Activated naive CD4-positive, alpha-beta T cell treated with anti-CD3 and anti-CD28 coated beads for 36 hours (primary cell): ENCODE measurements at regions of chr19 and their contacts with region 1.

Region 1: DNA sequence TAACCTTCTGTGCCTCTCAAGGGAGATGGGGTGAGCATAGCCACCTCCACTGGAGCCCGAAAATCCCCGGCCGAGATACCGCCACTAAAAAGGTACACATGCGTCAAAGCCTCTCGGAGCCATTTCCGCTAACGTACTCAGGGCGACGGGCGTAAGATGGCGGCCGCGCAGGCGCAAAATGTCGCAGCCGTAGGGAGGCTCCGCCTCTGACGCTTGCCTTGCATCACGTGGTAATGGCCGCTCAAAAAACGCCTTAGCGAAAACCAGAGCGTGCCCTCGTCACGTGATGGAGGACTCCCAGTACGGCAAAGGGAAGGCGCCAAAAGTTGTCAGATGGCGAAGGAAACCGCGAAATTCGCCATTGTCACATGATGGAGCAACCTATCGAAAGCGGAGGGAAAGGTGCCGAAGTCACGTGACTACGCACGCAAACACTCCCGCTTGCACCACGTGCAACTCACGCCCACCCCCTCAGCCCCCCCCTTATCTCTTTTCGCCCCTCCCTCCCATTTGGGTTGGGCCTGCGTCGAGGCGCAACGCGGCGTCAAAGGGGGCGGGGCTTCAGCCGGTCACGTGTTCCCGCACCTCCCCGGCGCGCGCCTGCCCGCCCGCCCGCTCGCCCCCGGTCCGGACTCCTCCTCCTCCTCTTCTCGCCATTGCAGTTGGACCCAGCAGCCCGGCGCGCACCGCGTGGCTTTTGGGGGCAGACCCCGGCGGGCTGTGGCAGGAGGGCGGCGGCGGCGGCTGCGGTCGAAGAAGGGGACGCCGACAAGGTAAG is at the start of gene ILF3:
- DNase-seq: peak; percentile 100
- H3K4me3 Mint-ChIP-seq: peak within 1 kb of the TSS; percentile 93
- H3K27ac Mint-ChIP-seq: peak within 1 kb of the TSS; percentile 97
- H3K4me1 Mint-ChIP-seq: peaks cover 39% of the 10 kb centered on the region
- H3K27me3 Mint-ChIP-seq: no peaks in the 10 kb centered on the region
- total RNA-seq, gene ILF3: 399 to 408 TPM

Region 2: GRCh38 chr19:10502524-10503001 is 151.3 kb before region 1 on chr19:
- CTCF ChIA-PET with region 1: interaction called, 3 read pairs
- intact Hi-C with region 1: loop called (anchors 2 kb)
- DNase-seq: peak; percentile 93
- H3K4me3 Mint-ChIP-seq: peak overlapping the region; percentile 89
- H3K27ac Mint-ChIP-seq: peak overlapping the region; percentile 88
- H3K4me1 Mint-ChIP-seq: peaks cover 37% of the 10 kb centered on the region
- H3K27me3 Mint-ChIP-seq: no peaks in the 10 kb centered on the region

Region 3: DNA sequence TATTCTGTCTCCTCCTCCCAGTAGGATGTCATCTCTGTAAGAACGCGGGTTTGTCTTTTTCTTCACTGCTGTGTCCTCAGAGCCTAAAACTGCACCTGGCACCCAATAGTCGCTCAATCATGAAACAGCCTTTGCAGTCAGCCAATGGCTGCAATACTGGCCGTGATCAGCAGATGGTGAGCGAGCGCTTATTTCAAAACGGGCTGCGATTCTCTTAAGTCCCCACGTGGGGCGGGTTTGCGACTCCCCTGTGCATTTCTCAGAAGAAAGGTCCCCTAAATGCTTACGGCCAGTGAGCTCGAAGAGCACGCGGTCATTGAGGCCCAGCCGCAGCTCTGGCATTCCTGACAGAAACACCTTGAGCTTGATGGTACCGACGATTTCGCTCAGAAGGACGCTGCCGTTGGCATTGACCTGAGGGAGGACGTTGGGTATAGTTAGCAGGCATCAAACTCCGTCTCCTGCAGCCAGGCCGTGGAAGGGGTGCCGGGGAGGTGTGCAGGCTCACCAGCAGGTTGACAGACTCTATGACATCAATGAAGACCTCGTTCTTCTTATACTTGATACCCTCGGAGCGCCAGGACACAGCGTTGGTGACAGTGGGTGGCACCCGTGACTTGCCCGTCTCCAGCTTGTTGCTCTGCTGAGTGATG is 72.8 kb before region 1 on chr19:
- CTCF ChIA-PET with region 1: interaction called, 28 read pairs
- intact Hi-C with region 1: loop called (anchors 2 kb)
- DNase-seq: peak; percentile 97
- H3K4me3 Mint-ChIP-seq: no peak overlapping the region
- H3K27ac Mint-ChIP-seq: no peak overlapping the region
- H3K4me1 Mint-ChIP-seq: peaks cover 6% of the 10 kb centered on the region
- H3K27me3 Mint-ChIP-seq: no peaks in the 10 kb centered on the region

Region 4: DNA sequence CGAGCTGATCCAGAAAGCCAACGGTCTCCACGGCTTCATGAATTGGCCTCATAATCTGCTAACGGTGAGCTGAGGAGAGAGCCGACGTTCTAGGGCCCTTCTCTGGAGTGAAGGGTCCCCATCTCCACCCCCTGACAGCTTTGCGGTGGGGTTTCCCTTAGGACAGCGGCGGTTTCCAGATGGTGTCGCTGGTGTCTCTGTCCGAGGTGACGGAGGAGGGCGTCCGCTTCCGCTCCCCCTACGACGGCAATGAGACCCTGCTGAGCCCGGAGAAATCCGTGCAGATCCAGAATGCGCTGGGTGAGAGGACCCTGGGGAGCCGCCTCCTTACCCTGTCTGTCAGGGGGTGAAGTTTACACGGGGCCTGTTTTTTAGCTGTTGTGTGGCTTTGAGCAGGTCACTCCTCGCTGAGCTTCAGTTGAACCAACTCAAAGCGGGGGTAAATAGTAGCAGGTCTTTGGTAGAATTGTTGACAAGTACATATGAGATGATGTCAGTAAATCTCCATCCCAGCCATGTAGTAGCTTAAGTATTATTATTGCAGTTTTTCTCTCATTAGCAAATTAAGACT is 48.1 kb after region 1 on chr19:
- CTCF ChIA-PET with region 1: interaction called, 78 read pairs
- intact Hi-C with region 1: loop called (anchors 1 kb)
- DNase-seq: peak; percentile 48
- H3K4me3 Mint-ChIP-seq: peak overlapping the region; percentile 83
- H3K27ac Mint-ChIP-seq: peak overlapping the region; percentile 68
- H3K4me1 Mint-ChIP-seq: peaks cover 11% of the 10 kb centered on the region
- H3K27me3 Mint-ChIP-seq: peaks cover 6% of the 10 kb centered on the region

Region 5: DNA sequence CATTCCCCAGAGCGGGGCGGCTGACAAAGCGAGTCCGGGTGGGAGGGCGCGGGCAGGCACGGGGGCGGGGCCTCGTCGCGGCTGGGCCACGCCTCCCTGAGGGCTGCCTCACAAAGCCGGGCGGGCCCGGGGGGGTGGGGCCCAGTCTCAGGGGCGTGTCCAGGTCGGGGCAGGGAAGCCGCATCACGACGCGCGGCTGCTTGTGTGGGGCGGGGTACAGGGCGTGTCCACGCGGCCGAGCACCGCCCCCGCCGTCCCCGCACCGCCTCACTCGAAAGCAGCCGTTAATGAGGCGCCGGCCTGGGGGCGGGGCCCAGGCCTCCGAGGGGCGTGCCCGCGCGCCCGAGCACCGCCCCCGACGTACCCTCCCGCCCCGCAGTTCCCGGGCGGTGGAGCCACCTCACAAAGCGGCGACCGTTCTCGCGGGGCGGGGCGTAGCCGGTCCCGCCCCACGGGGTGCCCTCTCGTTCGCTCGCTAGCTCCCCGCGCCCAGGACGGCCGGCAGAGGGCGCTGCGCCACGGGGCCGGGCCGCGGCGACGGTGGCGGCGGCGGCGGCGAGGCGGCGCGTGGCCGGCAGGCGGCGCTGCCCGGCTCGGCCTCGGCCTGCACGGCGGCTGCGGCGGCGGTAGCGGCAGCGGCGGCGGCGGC is 217.2 kb after region 1 on chr19 and contains the start of gene CARM1:
- CTCF ChIA-PET with region 1: no interaction called
- intact Hi-C with region 1: loop called (anchors 1 kb)
- DNase-seq: peak; percentile 99
- H3K4me3 Mint-ChIP-seq: peak within 1 kb of the TSS; percentile 85
- H3K27ac Mint-ChIP-seq: peak within 1 kb of the TSS; percentile 93
- H3K4me1 Mint-ChIP-seq: peaks cover 31% of the 10 kb centered on the region
- H3K27me3 Mint-ChIP-seq: no peaks in the 10 kb centered on the region
- total RNA-seq, gene CARM1: 88.4 to 89.3 TPM

Region 6: GRCh38 chr19:10936661-10937084 is 282.8 kb after region 1 on chr19:
- CTCF ChIA-PET with region 1: no interaction called
- intact Hi-C with region 1: no loop called
- DNase-seq: peak; percentile 46
- H3K4me3 Mint-ChIP-seq: no peak overlapping the region
- H3K27ac Mint-ChIP-seq: no peak overlapping the region
- H3K4me1 Mint-ChIP-seq: peaks cover 6% of the 10 kb centered on the region
- H3K27me3 Mint-ChIP-seq: no peaks in the 10 kb centered on the region

Region 7: DNA sequence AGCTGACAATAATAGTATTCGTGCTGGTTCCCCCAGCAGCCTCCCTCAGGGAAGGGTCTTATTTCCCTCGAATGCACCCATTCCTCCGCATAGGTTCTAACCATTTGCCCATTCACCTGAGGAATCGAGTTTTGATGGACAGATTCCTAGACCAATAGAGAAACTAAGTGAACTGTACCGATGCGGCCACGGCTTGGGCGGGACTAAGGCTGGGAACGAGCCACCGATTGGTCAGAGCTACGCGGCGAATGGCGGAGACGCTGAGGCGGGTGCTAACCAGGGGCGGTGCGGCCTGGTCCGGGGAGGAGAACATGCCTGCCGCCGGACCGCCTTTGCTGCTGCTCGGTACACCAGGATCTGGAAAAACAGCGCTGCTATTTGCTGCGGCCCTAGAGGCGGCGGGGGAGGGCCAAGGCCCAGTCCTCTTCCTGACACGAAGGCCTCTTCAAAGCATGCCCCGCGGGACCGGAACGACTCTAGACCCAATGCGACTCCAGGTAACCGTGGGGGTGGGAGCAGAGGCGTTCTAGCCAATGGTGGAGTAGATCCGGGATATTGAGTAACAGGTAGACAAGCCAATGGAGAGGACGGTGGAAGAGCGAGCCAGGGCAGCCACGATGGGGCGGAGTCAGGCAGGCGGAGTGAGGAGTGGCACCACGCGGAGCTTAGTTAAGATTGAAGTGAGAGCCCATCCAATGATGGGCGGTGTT is 720.7 kb after region 1 on chr19 and contains the start of gene SWSAP1:
- CTCF ChIA-PET with region 1: no interaction called
- intact Hi-C with region 1: loop called (anchors 10 kb)
- DNase-seq: peak; percentile 99
- H3K4me3 Mint-ChIP-seq: no peak within 1 kb of the TSS
- H3K27ac Mint-ChIP-seq: no peak within 1 kb of the TSS
- H3K4me1 Mint-ChIP-seq: peaks cover 35% of the 10 kb centered on the region
- H3K27me3 Mint-ChIP-seq: no peaks in the 10 kb centered on the region
- total RNA-seq, gene SWSAP1: 1.1 to 2.1 TPM